ENCODE measurements at regions of chr1 and their contacts with region 1.

Region 1: DNA sequence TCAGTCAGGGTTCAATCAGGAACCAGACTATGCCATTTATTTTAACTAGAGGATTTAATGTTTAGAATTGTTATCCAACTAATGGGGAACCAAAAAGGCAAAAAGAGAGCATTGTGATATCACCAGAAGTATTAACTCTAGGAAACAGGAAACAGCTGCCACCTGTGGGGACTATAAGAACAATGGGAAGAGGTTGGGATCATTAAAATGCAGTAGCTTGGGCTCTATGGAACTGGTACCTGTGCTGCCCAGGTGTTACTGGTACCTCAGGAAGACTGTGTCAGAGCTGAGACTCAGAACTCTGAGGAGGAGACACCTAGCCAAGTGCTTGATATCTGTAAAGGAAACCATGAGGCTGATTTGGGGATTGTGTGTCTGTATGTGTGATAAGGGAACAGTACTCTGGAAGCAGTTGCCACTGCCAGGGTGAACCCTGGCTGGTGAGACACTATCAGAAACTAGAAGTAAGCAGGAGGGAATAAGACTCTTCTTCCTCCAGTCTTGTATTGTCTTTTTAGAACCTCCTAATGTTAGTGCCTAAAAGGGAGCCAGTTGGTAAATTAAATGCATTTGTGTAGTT is 49.4 kb downstream of the MAN1A2 start:
- DNase-seq: no peak
- H3K4me3 ChIP-seq: no peak overlapping the region
- H3K27ac ChIP-seq: no peak overlapping the region
- H3K4me1 ChIP-seq: no peaks in the 10 kb centered on the region
- H3K27me3 ChIP-seq: no peaks in the 10 kb centered on the region
- CTCF ChIP-seq: no peak
- EP300 ChIP-seq: no peak
- POLR2A ChIP-seq: no peak

Region 2: GRCh38 chr1:117312225-117313138 is 104.2 kb before region 1 on chr1:
- in situ Hi-C with region 1: loop called in 1 of 4 experiments (anchors 25 kb)
- intact Hi-C with region 1: no loop called
- DNase-seq: no peak
- H3K4me3 ChIP-seq: no peak overlapping the region
- H3K27ac ChIP-seq: no peak overlapping the region
- H3K4me1 ChIP-seq: no peaks in the 10 kb centered on the region
- H3K27me3 ChIP-seq: no peaks in the 10 kb centered on the region
- CTCF ChIP-seq: peak; percentile 51 to 66 (median 56)
- EP300 ChIP-seq: no peak
- POLR2A ChIP-seq: no peak

Region 3: DNA sequence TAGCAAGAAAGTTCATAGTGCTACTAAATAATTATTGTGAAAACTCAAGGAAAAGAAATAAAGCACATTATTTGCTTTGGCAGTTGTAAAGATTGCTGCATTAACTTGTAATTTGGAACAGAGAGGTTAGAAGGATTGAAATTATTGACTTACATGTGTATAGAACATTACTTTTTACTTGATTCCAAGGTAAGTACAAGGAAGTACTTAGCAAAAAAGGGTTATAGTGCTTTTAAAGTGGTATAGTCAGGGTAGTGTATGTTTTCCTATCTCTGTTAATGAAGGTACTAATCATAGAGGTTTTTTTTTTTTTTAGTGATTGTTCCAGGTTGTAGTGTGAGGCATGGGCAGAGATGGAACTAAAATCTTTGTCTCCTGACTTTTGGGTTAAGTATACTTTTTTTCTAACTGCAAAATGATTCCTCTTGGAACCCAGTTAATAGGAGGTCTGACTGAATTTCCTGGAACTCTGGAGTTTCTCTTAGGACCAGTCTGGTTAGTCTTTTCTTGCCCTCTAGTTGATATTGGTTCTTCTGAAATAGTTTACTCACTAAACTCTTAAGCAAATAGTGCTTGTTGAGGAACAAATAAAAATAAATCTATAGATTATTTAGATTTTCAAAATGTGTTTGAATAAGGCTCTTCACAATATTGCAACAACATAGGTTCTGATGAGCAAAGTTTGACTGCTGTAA is 19.9 kb before region 1 on chr1:
- in situ Hi-C with region 1: no loop called
- intact Hi-C with region 1: loop called (anchors 2 kb)
- DNase-seq: no peak
- H3K4me3 ChIP-seq: no peak overlapping the region
- H3K27ac ChIP-seq: no peak overlapping the region
- H3K4me1 ChIP-seq: peaks cover 0 to 17% (median 2%) of the 10 kb centered on the region in 4 donors
- H3K27me3 ChIP-seq: no peaks in the 10 kb centered on the region
- CTCF ChIP-seq: no peak
- EP300 ChIP-seq: no peak
- POLR2A ChIP-seq: no peak

Region 4: DNA sequence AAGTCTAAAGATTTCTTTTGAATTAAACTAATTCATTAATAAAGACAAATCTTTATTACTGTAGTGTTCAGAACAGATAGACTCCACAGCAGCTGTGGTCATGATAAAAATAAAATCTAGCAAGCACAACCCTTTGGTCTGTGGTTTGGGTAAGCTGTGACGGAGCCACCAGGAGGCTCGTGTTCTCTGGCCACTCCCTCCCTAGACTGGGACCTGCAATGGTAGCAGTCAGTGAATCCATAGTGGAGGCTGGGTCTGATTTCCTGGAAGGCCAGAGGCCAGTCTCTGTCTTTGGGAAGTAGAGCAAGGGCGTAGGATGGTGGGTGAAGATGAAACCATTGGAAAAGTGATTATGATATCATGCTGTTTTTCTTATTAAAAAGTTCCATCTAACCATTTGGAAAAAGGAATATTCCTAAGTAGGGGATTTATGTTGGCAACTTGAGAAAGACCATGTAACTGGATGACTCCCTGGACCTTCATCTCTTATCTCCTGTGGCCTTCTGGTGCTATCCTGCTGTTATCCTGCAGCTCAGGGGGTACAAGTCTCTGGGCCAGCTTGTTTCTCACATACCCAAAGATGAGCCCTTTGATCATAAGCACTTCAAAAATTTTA is 228.2 kb after region 1 on chr1:
- in situ Hi-C with region 1: no loop called
- intact Hi-C with region 1: no loop called
- DNase-seq: no peak
- H3K4me3 ChIP-seq: no peak overlapping the region
- H3K27ac ChIP-seq: peak overlapping the region in 2 of 4 donors; percentile 5 to 8
- H3K4me1 ChIP-seq: peaks cover 0 to 11% (median 5%) of the 10 kb centered on the region in 4 donors
- H3K27me3 ChIP-seq: no peaks in the 10 kb centered on the region
- CTCF ChIP-seq: no peak
- EP300 ChIP-seq: no peak
- POLR2A ChIP-seq: no peak

Measured in transverse colon (tissue), 4 donors.